Psoas muscle (tissue), 8 donors: ENCODE measurements at regions of chr7 and their contacts with region 1.

Region 1: DNA sequence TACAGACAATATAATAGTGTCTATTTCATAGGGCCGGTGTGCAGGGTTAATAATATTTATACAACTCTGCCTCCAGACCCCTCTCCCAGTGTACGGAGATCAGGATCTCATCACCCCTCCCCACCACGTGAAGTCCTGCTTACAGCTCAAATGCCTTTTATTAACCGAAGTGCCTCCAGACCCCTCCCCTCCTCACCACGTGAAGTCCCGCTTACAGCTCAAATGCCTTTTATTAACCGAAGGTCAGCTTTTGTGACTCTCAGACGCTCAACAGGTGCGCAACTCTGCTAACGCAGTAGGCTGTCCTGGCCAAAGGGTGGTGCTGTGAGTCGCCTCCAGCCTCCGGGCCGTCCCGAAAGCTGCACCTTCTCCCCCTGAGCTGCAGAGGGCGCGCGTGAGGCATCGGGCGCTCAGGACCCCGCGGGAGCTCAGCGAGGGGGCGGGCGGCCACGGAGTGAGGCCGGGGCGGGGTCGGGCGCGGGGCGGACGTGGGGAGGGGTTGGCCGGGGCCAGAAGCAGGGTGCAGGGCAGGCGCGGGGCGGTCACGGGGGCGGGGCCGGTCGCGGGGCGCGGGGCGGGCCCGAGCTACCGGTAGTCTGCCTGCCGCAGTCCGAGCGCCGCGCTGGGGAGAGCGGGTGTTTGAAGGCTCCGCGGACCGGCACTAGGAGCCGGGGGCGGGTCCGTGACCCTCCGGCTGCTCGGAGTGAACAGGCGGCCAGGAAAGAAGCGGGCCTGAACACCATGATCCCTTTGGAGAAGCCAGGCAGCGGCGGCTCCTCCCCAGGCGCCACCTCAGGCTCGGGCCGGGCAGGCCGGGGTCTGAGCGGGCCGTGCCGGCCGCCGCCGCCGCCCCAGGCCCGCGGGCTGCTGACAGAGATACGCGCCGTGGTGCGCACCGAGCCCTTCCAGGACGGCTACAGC is at the start of gene STK17A:
- DNase-seq: peak; percentile 92 to 95
- ATAC-seq: peak; percentile 92 to 97 (median 95)
- H3K4me3 ChIP-seq: peak within 1 kb of the TSS; percentile 81
- H3K27ac ChIP-seq: peak within 1 kb of the TSS; percentile 92
- H3K4me1 ChIP-seq: peaks cover 21% of the 10 kb centered on the region
- H3K27me3 ChIP-seq: no peaks in the 10 kb centered on the region
- CTCF ChIP-seq: peak; percentile 94
- total RNA-seq, gene STK17A: 16.5 to 39.8 (median 19.6) TPM

Region 2: GRCh38 chr7:43273939-43274719 is 308.6 kb before region 1 on chr7:
- intact Hi-C with region 1: no loop called
- DNase-seq: no peak
- ATAC-seq: no peak
- H3K4me3 ChIP-seq: no peak overlapping the region
- H3K27ac ChIP-seq: no peak overlapping the region
- H3K4me1 ChIP-seq: peaks cover 7% of the 10 kb centered on the region
- H3K27me3 ChIP-seq: no peaks in the 10 kb centered on the region
- CTCF ChIP-seq: no peak

Region 3: DNA sequence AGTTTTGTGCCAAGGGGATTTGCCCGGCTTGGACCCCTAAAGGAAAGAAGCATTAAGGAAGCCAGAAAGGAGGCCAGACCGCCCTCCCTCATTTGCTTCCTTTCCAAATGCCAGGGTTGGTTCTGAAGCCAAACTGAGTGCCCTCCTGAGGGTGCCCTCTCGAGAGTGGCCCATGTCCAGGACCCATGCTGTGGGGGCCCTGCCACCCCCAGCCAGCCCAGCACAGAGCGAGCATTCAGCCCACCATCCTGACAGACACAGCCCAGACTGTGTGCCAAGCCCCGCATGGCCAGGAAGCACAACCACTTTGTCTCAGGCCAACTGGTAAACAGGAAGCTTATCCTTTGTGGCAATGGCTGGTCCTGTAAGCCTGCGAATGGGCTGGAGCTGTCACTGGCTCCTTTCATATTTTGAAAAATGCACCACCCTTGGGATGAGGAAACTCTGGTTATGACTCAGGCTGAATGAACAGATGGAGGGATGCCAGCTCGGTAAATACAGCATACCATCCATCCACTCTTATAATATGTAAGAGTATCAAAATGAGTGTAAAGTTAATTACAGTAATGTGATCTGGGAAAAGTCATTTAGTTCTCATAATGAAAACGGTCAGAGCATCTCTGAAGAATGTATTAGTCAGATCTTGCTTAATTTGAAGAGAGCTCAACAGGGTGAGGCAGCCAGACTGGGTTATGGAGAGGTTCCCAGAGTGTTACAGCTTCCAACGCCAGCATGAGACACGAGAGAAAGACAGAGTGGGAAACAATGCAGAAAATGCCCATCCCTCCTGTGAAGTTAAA is 65.1 kb after region 1 on chr7:
- intact Hi-C with region 1: loop called in 1 of 2 experiments (anchors 5 kb)
- DNase-seq: peak; percentile 73 to 85
- ATAC-seq: peak; percentile 85 to 91 (median 90)
- H3K4me3 ChIP-seq: no peak overlapping the region
- H3K27ac ChIP-seq: peak overlapping the region; percentile 91
- H3K4me1 ChIP-seq: peaks cover 57% of the 10 kb centered on the region
- H3K27me3 ChIP-seq: no peaks in the 10 kb centered on the region
- CTCF ChIP-seq: no peak

Region 4: GRCh38 chr7:43700059-43700501 is 117.3 kb after region 1 on chr7:
- intact Hi-C with region 1: loop called (anchors 1 to 5 kb)
- DNase-seq: no peak
- ATAC-seq: peak in 3 of 4 donors; percentile 64 to 86 (median 71)
- H3K4me3 ChIP-seq: no peak overlapping the region
- H3K27ac ChIP-seq: no peak overlapping the region
- H3K4me1 ChIP-seq: peaks cover 22% of the 10 kb centered on the region
- H3K27me3 ChIP-seq: no peaks in the 10 kb centered on the region
- CTCF ChIP-seq: peak; percentile 73

Region 5: DNA sequence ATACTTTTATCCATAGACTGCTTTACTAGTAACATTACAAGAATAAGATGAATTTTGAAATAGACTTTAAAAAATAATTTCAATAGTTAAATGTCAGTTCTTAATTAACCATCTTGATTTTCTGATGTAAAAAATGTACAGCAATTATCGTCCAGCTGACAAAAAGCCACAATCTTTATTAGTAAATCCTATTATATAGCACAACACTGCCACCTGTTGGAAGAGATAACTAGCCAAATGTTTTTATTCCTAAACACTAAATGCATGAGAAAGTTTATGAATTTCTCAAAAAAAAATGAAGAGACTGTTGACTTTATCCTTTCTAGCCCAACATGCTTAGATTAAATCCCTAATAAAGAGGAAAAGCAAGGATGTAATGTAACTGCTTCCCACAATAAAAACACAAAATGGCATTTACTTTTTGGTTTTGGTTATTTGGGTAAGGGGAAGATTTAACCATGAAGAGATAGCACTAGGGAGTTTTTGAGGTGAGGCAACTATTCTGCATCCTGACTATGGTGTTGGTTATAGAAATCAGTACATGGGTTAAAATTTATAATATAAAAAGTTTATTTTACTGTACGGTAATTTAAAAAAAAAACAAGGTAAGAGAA is 138.5 kb after region 1 on chr7:
- intact Hi-C with region 1: loop called (anchors 2 to 5 kb)
- DNase-seq: no peak
- ATAC-seq: peak in 1 of 4 donors; percentile 49
- H3K4me3 ChIP-seq: no peak overlapping the region
- H3K27ac ChIP-seq: no peak overlapping the region
- H3K4me1 ChIP-seq: peaks cover 30% of the 10 kb centered on the region
- H3K27me3 ChIP-seq: no peaks in the 10 kb centered on the region
- CTCF ChIP-seq: peak; percentile 74

Region 6: DNA sequence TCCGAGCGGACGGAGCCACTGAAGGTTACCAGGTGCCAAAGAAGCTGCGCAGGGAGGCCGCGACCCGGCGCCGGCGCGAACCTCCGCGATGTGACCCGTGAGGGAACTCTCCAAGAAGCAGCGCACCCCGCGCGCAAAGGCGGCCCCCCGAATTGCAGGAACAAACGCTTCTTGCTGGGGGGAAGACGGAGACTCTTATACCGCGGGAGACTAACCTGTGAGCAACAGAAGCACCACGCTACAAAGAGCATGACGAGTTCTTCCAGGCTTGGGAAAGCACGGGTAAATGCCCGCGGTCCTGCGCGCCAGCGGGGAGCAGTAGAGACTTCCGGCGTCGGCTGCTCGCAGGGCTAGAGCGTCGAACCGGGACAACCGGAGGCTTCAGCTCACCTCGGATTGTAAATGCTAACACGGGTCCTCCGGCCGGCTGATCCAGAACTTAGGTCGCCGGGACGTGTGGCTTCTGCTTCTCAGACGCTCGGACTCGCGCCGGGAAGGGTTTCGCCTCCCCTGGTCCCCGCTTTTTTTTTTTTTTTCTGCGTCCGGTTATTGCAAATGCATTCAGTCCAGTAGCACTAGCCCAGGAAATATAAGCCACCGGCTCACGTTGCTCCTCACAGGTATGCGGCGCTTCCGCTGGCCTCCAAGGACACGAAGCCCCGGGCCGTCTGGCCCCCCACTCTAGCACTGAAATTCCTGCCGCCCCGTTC is 146.6 kb after region 1 on chr7 and contains the start of gene COA1:
- intact Hi-C with region 1: loop called (anchors 2 to 5 kb)
- DNase-seq: peak; percentile 88 to 94
- ATAC-seq: peak; percentile 98 to 99 (median 98)
- H3K4me3 ChIP-seq: peak within 1 kb of the TSS; percentile 77
- H3K27ac ChIP-seq: peak within 1 kb of the TSS; percentile 96
- H3K4me1 ChIP-seq: peaks cover 34% of the 10 kb centered on the region
- H3K27me3 ChIP-seq: no peaks in the 10 kb centered on the region
- CTCF ChIP-seq: no peak
- total RNA-seq, gene COA1: 41.5 to 60.7 (median 53.9) TPM

Region 7: DNA sequence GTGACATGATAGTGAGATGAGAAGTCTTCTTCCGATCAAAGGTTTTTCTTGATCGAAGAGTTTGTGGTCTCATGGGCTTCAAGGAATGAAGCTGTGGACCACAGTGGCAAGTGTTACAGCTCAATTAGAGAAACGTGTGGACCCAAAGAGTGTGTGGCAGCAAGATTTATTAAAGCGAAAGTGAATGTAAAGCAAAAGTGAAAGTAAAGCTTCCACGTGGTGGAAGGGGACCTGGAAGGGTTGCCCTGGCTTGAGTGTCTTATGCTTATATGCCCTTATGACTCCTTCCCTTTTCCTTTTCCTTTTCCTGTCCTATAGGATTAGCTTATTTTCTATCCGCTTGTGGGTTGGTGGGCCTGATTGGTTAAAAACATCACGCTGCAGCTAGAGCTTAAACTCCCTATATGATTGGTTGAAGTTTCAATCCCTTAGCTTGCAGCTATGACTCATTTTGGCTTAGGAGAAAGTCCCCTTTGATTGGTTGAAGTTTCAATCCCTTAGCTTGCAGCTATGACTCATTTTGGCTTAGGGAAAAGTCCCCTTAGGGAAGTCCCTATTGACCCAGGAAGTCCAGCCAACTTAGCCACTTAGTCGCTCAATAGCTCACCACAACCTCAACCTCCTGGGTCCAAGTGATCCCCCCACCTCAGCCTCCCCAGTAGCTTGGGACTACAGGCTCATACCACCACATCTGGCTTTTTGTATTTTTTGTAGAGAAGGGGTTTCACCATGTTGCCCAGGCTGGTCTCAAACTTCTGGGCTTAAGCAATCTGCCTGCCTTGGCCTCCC is 251.9 kb after region 1 on chr7:
- intact Hi-C with region 1: loop called (anchors 1 to 10 kb)
- DNase-seq: no peak
- ATAC-seq: no peak
- H3K4me3 ChIP-seq: peak overlapping the region; percentile 26
- H3K27ac ChIP-seq: no peak overlapping the region
- H3K4me1 ChIP-seq: no peaks in the 10 kb centered on the region
- H3K27me3 ChIP-seq: peaks cover 0 to 4% (median 0%) of the 10 kb centered on the region in 3 donors
- CTCF ChIP-seq: no peak